ENCODE measurements at regions of chr1 and their contacts with region 1.

Region 1: GRCh38 chr1:25247024-25247828 is at the start of gene RSRP1:
- DNase-seq: peak; percentile 100
- ATAC-seq: peak; percentile 90
- H3K4me3 Mint-ChIP-seq: peak within 1 kb of the TSS; percentile 90
- H3K27ac Mint-ChIP-seq: peak within 1 kb of the TSS; percentile 99
- H3K4me1 Mint-ChIP-seq: peaks cover 35% of the 10 kb centered on the region
- H3K27me3 Mint-ChIP-seq: no peaks in the 10 kb centered on the region
- total RNA-seq, gene RSRP1: 292 to 305 TPM

Region 2: DNA sequence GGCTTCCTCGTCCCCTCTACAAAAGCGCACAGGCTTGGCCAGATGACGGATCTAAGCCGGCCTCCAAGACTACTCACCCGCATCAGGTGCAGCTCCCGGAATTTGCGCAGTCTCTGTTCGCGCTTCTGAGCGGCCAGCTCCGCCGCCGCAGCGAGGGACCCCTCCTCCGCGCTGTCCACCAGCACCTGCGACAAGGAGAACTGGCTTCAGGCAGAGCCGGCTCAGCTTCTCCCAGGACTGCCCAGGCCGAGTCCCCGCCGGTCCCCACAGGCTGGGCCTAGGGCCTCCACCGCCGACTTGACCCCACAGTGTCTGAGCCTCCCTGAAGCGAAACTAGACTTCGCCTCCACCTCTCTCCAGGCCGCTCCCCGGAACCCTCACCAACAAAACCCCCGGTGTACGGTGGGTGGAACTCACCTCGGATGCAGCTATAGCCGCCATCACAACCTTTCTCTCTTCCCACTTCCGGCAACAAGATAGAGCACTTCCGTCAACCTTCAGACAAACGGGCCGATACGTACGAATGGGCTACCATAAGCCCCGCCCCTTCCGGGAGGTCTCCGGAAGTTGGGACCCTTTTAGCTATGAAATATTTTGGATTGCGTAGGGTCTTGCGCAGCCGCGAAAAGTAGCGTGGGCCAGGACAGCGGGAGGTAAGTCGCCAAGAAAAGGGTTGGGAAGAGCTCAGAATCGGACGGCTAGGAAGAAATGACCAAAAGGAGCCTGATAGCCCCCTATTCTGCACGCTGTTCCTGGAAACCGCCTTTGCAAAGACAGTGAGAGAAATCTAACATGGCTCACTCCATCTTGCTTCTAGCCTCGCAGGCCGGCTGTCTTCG is 15.0 kb before region 1 on chr1 and contains the start of gene SYF2:
- POLR2A ChIA-PET with region 1: interaction called, 82 read pairs
- DNase-seq: peak; percentile 89
- ATAC-seq: peak; percentile 86
- H3K4me3 Mint-ChIP-seq: no peak within 1 kb of the TSS
- H3K27ac Mint-ChIP-seq: no peak within 1 kb of the TSS
- H3K4me1 Mint-ChIP-seq: peaks cover 22% of the 10 kb centered on the region
- H3K27me3 Mint-ChIP-seq: no peaks in the 10 kb centered on the region
- total RNA-seq, gene SYF2: 50.1 to 52.9 TPM

Region 3: DNA sequence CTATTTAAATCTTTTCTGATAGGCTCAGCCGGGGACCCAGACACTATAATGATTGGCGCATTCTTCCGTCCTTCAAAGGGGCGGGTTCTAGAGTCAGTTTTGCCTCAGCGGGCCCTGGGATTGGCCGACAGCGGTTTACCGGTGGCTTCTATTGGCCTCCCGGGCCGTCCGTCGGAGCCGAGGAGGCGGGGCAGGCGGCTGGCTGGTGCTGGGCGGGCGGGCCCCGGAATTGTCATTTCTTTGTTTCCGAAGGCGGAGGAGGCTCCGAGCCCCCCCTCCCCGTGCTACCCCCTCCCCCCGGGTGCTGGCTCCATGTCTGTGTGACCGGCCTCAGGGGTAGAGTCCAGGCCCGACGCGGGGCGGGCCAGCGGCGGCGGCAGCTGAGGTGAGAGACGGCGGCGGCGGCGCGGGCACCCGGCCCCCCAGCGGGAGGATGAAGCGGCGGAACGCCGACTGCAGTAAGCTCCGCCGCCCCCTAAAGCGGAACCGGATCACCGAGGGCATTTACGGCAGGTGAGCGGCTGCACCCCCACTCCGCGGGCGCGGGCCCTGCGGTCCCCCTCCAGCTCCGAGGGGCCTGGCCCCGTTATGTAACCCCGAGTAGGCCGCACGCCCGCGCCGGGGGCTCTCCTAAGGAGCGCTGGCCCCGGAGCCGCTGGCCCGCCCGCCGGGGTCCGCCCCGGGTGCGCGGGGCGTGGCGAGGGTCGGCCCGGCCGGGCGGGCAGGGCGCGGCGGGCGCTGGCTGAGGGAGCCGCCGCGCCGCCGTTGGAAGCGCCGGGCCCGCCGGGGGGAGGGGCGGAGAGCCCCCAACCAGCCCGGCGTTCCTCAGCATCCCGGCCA is 183.7 kb after region 1 on chr1 and contains the start of gene MACO1:
- POLR2A ChIA-PET with region 1: interaction called, 10 read pairs
- DNase-seq: peak; percentile 98
- ATAC-seq: peak; percentile 91
- H3K4me3 Mint-ChIP-seq: peak within 1 kb of the TSS; percentile 95
- H3K27ac Mint-ChIP-seq: peak within 1 kb of the TSS; percentile 96
- H3K4me1 Mint-ChIP-seq: peaks cover 47% of the 10 kb centered on the region
- H3K27me3 Mint-ChIP-seq: no peaks in the 10 kb centered on the region
- total RNA-seq, gene MACO1: 20.6 to 21.1 TPM